ENCODE measurements at regions of chr5 and their contacts with region 1.

Region 1: DNA sequence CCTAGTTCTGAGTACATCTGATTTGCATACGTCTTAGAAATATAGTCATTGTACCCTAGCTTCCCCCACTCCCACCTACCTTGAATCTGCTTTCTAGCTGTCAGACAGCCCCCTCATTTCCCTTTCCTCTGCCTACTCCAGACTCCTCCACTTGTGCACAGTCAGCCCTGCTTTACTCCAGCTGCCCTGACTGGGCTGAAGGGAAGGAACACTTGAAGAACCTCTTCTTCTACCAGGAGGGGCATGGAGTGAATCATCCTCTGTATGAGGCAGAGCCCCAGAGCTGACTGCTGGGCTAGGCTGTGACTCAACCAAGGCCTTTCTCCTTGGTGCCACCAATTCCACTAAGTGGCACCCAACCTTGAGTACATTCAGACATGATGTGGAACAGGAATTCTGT is 18.1 kb upstream of the ZFR start:
- DNase-seq: peak; percentile 68
- H3K4me3 ChIP-seq: no peak overlapping the region
- H3K27ac ChIP-seq: no peak overlapping the region
- H3K4me1 ChIP-seq: no peaks in the 10 kb centered on the region
- H3K27me3 ChIP-seq: no peaks in the 10 kb centered on the region
- CTCF ChIP-seq: no peak

Region 2: DNA sequence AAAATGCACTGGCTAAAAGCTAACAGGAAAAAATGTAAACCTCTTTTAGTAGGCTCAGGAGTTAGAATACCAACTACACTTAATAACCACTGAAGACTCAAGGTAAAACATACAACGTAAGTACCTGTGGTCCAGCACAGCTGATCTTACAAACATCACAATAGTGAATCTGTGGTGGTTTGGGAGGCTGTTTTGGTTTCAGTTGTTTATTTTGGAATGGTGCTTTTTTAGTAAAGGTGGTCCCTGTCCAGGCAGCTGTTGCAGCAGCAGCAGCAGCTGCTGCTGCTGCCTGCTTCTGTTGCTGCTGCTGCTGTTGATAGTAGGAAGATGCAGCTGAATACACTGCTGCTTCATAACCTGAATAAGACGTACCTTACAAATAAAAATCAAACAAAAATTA is 56.0 kb before region 1 on chr5:
- CTCF ChIA-PET with region 1: no interaction called
- dilution Hi-C with region 1: loop called (anchors 5 kb)
- in situ Hi-C with region 1: no loop called
- intact Hi-C with region 1: no loop called
- DNase-seq: no peak
- H3K4me3 ChIP-seq: no peak overlapping the region
- H3K27ac ChIP-seq: no peak overlapping the region
- H3K4me1 ChIP-seq: no peaks in the 10 kb centered on the region
- H3K27me3 ChIP-seq: no peaks in the 10 kb centered on the region
- CTCF ChIP-seq: no peak

Region 3: GRCh38 chr5:32436553-32437242 is 25.9 kb before region 1 on chr5:
- CTCF ChIA-PET with region 1: no interaction called
- dilution Hi-C with region 1: no loop called
- in situ Hi-C with region 1: no loop called
- intact Hi-C with region 1: no loop called
- DNase-seq: no peak
- H3K4me3 ChIP-seq: no peak overlapping the region
- H3K27ac ChIP-seq: no peak overlapping the region
- H3K4me1 ChIP-seq: peaks cover 6% of the 10 kb centered on the region
- H3K27me3 ChIP-seq: no peaks in the 10 kb centered on the region
- CTCF ChIP-seq: no peak

Region 4: GRCh38 chr5:32511776-32512374 is 49.3 kb after region 1 on chr5:
- CTCF ChIA-PET with region 1: no interaction called
- dilution Hi-C with region 1: loop called (anchors 5 kb)
- in situ Hi-C with region 1: no loop called
- intact Hi-C with region 1: no loop called
- DNase-seq: no peak
- H3K4me3 ChIP-seq: no peak overlapping the region
- H3K27ac ChIP-seq: no peak overlapping the region
- H3K4me1 ChIP-seq: peaks cover 18% of the 10 kb centered on the region
- H3K27me3 ChIP-seq: no peaks in the 10 kb centered on the region
- CTCF ChIP-seq: no peak

Region 5: GRCh38 chr5:33129309-33129708 is 666.7 kb after region 1 on chr5:
- CTCF ChIA-PET with region 1: no interaction called
- dilution Hi-C with region 1: no loop called
- in situ Hi-C with region 1: no loop called
- intact Hi-C with region 1: no loop called
- DNase-seq: no peak
- H3K4me3 ChIP-seq: no peak overlapping the region
- H3K27ac ChIP-seq: no peak overlapping the region
- H3K4me1 ChIP-seq: no peaks in the 10 kb centered on the region
- H3K27me3 ChIP-seq: no peaks in the 10 kb centered on the region
- CTCF ChIP-seq: no peak